ENCODE measurements at regions of chr15 and their contacts with region 1.

Region 1: GRCh38 chr15:101307048-101307896 is 12.2 kb upstream of the SNRPA1 start:
- DNase-seq: no peak
- ATAC-seq: peak; percentile 18

Region 2: DNA sequence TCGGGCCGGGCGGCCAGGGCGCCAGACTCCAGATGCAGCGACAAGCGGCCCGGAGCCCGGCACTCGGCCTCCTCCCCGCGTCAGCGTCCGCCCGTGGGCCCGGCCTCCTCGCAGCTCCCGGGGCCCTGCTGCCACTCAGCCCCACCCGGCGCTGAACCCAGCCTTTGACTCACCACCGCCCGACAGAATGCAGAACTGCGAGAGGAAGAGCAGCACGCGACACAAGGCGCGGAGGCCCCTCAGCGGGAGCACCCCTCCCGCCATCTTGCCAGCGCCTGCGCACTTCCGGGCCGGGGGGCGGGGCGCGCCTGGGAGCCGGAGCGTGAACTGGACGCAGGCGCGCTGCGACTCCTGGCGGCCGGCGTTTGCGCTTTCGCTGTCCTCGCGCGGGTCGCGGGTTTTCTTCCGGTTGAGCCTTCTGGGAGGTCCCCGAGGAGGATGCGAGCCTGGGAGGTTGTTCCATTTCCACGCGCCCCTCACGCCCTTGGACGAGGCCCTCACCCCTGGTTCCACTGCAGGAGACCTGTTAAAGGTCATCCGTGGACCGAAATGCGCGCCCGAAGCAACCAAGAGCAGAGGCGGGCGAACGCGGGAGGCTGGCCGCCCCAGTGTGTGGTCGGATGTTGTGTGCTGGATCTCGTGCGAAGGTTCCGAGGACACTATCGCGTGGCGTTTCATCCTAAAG is 345.0 kb after region 1 on chr15 and contains the start of gene TM2D3:
- intact Hi-C with region 1: loop called (anchors 5 kb)
- DNase-seq: peak; percentile 97
- ATAC-seq: peak; percentile 98
- total RNA-seq, gene TM2D3: 56.3 TPM